ENCODE measurements at regions of chr7 and their contacts with region 1.

Region 1: GRCh38 chr7:47435889-47436312 is 146.0 kb downstream of the TNS3 start:
- DNase-seq: peak in 1 of 2 experiments; percentile 23
- H3K4me3 ChIP-seq: no peak overlapping the region
- H3K27ac ChIP-seq: no peak overlapping the region
- H3K4me1 ChIP-seq: no peaks in the 10 kb centered on the region
- H3K27me3 ChIP-seq: no peaks in the 10 kb centered on the region
- CTCF ChIP-seq: peak; percentile 66 to 72 (median 69)
- EP300 ChIP-seq: no peak
- POLR2A ChIP-seq: no peak
- RAD21 ChIP-seq: peak; percentile 80 to 81

Region 2: GRCh38 chr7:47411281-47411869 is 24.5 kb before region 1 on chr7:
- CTCF ChIA-PET with region 1: interaction called, 10 read pairs
- POLR2A ChIA-PET with region 1: no interaction called
- DNase-seq: no peak
- H3K4me3 ChIP-seq: no peak overlapping the region
- H3K27ac ChIP-seq: no peak overlapping the region
- H3K4me1 ChIP-seq: no peaks in the 10 kb centered on the region
- H3K27me3 ChIP-seq: no peaks in the 10 kb centered on the region
- CTCF ChIP-seq: no peak
- EP300 ChIP-seq: no peak
- POLR2A ChIP-seq: no peak
- RAD21 ChIP-seq: no peak

Region 3: GRCh38 chr7:47453093-47454049 is 17.5 kb after region 1 on chr7:
- CTCF ChIA-PET with region 1: interaction called, 11 read pairs
- POLR2A ChIA-PET with region 1: no interaction called
- DNase-seq: no peak
- H3K4me3 ChIP-seq: no peak overlapping the region
- H3K27ac ChIP-seq: no peak overlapping the region
- H3K4me1 ChIP-seq: peaks cover 0 to 26% (median 12%) of the 10 kb centered on the region in 4 experiments; a peak in 6 of 7 replicates
- H3K27me3 ChIP-seq: no peaks in the 10 kb centered on the region
- CTCF ChIP-seq: no peak
- EP300 ChIP-seq: no peak
- POLR2A ChIP-seq: no peak
- RAD21 ChIP-seq: no peak

Region 4: GRCh38 chr7:47818796-47819606 is 383.1 kb after region 1 on chr7:
- CTCF ChIA-PET with region 1: interaction called, 12 read pairs
- POLR2A ChIA-PET with region 1: no interaction called
- DNase-seq: peak in 1 of 2 experiments; percentile 73
- H3K4me3 ChIP-seq: no peak overlapping the region
- H3K27ac ChIP-seq: no peak overlapping the region
- H3K4me1 ChIP-seq: peaks cover 0 to 5% (median 2%) of the 10 kb centered on the region in 4 experiments; a peak in 2 of 7 replicates
- H3K27me3 ChIP-seq: no peaks in the 10 kb centered on the region
- CTCF ChIP-seq: peak; percentile 69 to 97 (median 81)
- EP300 ChIP-seq: no peak
- POLR2A ChIP-seq: no peak
- RAD21 ChIP-seq: peak; percentile 92 to 93